Heart right ventricle (tissue), 16 donors: ENCODE measurements at regions of chr2 and their contacts with region 1.

Region 1: GRCh38 chr2:121095257-121096080 is 189.5 kb downstream of the TFCP2L1 start:
- DNase-seq: peak; percentile 41 to 74
- ATAC-seq: peak in 7 of 8 donors; percentile 47 to 71 (median 54)
- H3K4me3 ChIP-seq: no peak overlapping the region
- H3K27ac ChIP-seq: no peak overlapping the region
- H3K4me1 ChIP-seq: peaks cover 0 to 12% (median 0%) of the 10 kb centered on the region in 9 donors
- H3K27me3 ChIP-seq: peaks cover 0 to 14% (median 0%) of the 10 kb centered on the region in 7 donors
- CTCF ChIP-seq: peak; percentile 35 to 73 (median 65)

Region 2: DNA sequence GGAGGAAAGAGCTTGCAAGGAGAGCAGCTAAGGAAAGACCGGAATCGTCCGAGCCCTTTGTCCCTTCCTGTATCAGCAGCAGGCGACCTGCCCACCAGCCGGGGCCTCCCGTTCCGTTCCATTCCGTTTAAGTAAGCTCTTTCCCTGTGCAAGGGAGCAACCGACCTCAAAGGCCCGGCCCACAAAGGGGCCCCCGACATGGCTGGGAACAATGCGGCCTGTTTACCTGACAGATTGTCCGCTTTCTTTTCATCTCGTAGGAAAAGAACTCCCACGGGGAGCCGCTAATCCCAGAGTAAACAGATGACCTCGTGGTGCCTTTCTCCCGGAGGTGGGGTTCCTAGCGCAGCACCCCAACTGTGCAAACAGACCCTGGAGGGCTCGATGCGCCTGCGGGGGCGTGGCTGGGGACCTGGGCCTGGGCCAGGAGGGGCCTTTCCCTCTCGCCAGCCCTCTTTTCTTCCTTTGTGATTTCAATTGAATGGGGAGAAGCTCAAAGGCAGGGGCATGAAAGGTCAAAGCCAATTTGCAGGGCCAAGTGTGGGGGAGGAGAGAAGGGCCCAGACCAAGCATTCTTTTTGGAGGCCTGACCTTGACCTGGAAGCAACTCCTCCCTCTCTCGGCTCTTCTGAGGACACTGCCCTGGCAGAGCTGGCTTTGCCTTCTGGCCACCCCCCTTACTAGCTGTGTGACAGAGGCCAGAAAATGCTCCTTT is 629.3 kb before region 1 on chr2:
- intact Hi-C with region 1: no loop called
- DNase-seq: no peak
- ATAC-seq: peak in 1 of 8 donors; percentile 5
- H3K4me3 ChIP-seq: peak overlapping the region in 1 of 10 donors; percentile 12
- H3K27ac ChIP-seq: no peak overlapping the region
- H3K4me1 ChIP-seq: peaks cover 5 to 44% (median 34%) of the 10 kb centered on the region in 9 donors
- H3K27me3 ChIP-seq: peaks cover 0 to 5% (median 0%) of the 10 kb centered on the region in 7 donors
- CTCF ChIP-seq: no peak

Region 3: DNA sequence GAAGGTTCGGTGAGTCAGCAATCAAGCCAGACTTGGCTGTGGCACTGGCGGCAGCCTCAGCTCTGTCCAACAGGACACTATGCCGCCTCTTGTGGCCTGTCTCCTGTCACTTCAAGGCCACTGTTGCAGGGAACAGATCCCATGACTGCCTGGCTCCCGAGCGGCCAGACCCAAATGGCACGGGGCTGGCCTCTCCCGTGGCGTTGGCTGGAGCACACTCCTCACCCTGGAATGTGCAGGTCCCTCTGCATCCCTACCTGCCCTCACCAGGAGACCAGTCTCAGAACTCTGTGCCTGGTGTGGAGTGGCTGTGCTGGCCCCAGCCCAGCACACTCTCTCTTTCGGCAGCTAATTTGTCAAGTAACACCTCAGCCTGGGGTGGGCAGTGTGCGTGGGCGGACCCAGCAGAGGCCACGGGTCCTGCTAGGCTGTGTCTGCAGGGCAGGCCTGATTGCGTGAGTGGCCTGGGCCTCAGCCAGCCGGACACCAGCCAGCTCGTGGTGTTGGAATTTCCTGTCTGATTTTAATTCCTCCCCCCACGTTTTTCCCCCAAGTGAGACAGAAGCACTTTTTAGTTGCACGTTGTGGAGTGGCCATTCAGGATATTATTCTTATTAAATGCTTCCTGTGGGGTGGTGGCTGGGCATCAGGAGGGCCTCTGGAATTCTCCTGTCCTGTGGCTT is 180.5 kb before region 1 on chr2:
- intact Hi-C with region 1: no loop called
- DNase-seq: peak; percentile 84 to 85
- ATAC-seq: peak; percentile 79 to 91 (median 86)
- H3K4me3 ChIP-seq: no peak overlapping the region
- H3K27ac ChIP-seq: peak overlapping the region; percentile 21 to 81 (median 74)
- H3K4me1 ChIP-seq: peaks cover 19 to 52% (median 37%) of the 10 kb centered on the region in 9 donors
- H3K27me3 ChIP-seq: no peaks in the 10 kb centered on the region
- CTCF ChIP-seq: peak in 5 of 9 donors; percentile 12 to 47 (median 43)

Region 4: GRCh38 chr2:121297217-121297830 is 201.9 kb after region 1 on chr2:
- intact Hi-C with region 1: loop called in 1 of 10 experiments (anchors 5 kb)
- DNase-seq: no peak
- ATAC-seq: peak in 5 of 8 donors; percentile 42 to 64 (median 53)
- H3K4me3 ChIP-seq: no peak overlapping the region
- H3K27ac ChIP-seq: no peak overlapping the region
- H3K4me1 ChIP-seq: peaks cover 0 to 5% (median 0%) of the 10 kb centered on the region in 9 donors
- H3K27me3 ChIP-seq: peaks cover 0 to 16% (median 0%) of the 10 kb centered on the region in 7 donors
- CTCF ChIP-seq: peak in 8 of 9 donors; percentile 37 to 62 (median 60)

Region 5: GRCh38 chr2:121329786-121330185 is 234.3 kb after region 1 on chr2:
- intact Hi-C with region 1: loop called in 2 of 10 experiments (anchors 10 kb)
- DNase-seq: no peak
- ATAC-seq: no peak
- H3K4me3 ChIP-seq: no peak overlapping the region
- H3K27ac ChIP-seq: no peak overlapping the region
- H3K4me1 ChIP-seq: no peaks in the 10 kb centered on the region
- H3K27me3 ChIP-seq: peaks cover 0 to 3% (median 0%) of the 10 kb centered on the region in 7 donors
- CTCF ChIP-seq: no peak

Region 6: GRCh38 chr2:121345887-121346286 is 250.4 kb after region 1 on chr2:
- intact Hi-C with region 1: loop called in 3 of 10 experiments (anchors 5 to 10 kb)
- DNase-seq: no peak
- ATAC-seq: peak in 1 of 8 donors; percentile 49
- H3K4me3 ChIP-seq: no peak overlapping the region
- H3K27ac ChIP-seq: no peak overlapping the region
- H3K4me1 ChIP-seq: peaks cover 0 to 20% (median 5%) of the 10 kb centered on the region in 9 donors
- H3K27me3 ChIP-seq: no peaks in the 10 kb centered on the region
- CTCF ChIP-seq: no peak

Region 7: DNA sequence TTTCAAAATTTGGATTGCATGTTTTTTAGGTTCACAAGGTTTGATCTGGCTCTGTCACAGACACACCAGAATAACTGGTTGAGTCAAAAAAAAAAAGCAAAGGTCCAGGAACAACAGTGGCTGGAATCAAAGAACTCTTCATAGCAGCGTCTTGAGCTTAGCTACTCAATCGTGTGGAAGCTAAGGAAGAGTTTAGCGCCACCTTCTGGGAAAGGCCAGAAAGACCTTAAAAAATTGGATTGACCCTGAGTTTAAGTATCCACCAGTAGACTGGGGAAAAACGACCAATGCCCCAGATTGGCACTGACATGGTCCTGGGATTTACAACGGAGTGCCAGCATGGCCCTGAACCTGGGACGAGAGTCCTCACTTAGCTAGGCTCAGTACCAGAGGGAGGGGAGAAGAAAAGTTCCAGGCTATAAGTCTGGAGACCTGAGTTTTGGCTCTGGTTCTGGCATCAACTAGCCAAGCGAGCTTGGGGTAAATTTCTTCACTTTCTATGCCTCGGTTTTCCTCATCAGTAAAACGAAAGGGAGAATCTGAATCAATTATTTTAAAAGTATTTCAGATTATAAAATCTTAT is 260.7 kb after region 1 on chr2:
- intact Hi-C with region 1: loop called in 9 of 10 experiments (anchors 1 to 10 kb)
- DNase-seq: no peak
- ATAC-seq: peak in 4 of 8 donors; percentile 29 to 43 (median 36)
- H3K4me3 ChIP-seq: no peak overlapping the region
- H3K27ac ChIP-seq: no peak overlapping the region
- H3K4me1 ChIP-seq: peaks cover 0 to 46% (median 15%) of the 10 kb centered on the region in 9 donors
- H3K27me3 ChIP-seq: no peaks in the 10 kb centered on the region
- CTCF ChIP-seq: peak; percentile 29 to 74 (median 66)